ACHN (cell line): ENCODE measurements at regions of chr7 and their contacts with region 1.

Region 1: GRCh38 chr7:95476904-95477594 is 8.7 kb upstream of the ASB4 start:
- DNase-seq: peak; percentile 87

Region 2: GRCh38 chr7:94436018-94436604 is 1040.9 kb before region 1 on chr7:
- in situ Hi-C with region 1: loop called (anchors 25 kb)
- DNase-seq: peak; percentile 84

Region 3: DNA sequence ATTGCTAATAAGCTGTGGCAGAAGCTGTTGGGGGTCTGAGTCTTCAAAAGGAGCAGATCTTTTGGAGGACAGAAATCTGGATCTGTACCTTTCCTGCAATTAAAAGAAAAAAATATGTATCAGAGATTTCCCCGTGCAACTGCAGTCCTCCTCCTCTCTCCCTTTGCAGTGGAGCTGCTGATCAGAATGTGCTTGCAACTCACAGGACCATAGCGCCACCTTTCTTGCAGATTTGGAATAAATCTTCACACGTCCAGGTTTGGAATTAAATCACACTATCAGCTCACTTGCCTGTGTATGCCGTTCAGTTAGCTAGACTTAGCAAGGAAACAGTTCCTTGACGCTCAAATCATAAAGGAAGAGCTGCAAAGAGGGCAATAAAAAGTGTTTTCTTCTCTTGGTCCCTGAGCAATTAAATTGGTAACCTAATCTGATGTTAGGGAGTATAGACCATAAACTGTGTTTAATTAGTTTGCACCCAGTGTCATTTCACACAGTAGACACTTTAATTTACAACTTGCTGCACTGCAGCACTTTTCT is 230.1 kb before region 1 on chr7:
- in situ Hi-C with region 1: loop called (anchors 25 kb)
- DNase-seq: peak; percentile 87